Panc1 (cell line): ENCODE measurements at regions of chr16 and their contacts with region 1.

Region 1: GRCh38 chr16:64051824-64052223 is 1070.0 kb downstream of the CDH11 start:
- DNase-seq: peak; percentile 4
- ATAC-seq: no peak
- H3K4me3 ChIP-seq: no peak overlapping the region
- H3K27ac ChIP-seq: no peak overlapping the region
- H3K4me1 ChIP-seq: no peaks in the 10 kb centered on the region
- H3K27me3 ChIP-seq: no peaks in the 10 kb centered on the region
- CTCF ChIP-seq: peak; percentile 43; the same call in 1 of the 2 replicates

Region 2: GRCh38 chr16:63361032-63361624 is 690.7 kb before region 1 on chr16:
- CTCF ChIA-PET with region 1: no interaction called
- POLR2A ChIA-PET with region 1: no interaction called
- in situ Hi-C with region 1: no loop called
- intact Hi-C with region 1: loop called (anchors 10 kb)
- DNase-seq: peak; percentile 15
- ATAC-seq: no peak
- H3K4me3 ChIP-seq: no peak overlapping the region
- H3K27ac ChIP-seq: no peak overlapping the region
- H3K4me1 ChIP-seq: no peaks in the 10 kb centered on the region
- H3K27me3 ChIP-seq: no peaks in the 10 kb centered on the region
- CTCF ChIP-seq: peak; percentile 62; the same call in 1 of the 2 replicates

Region 3: GRCh38 chr16:63461248-63461841 is 590.5 kb before region 1 on chr16:
- CTCF ChIA-PET with region 1: no interaction called
- POLR2A ChIA-PET with region 1: no interaction called
- in situ Hi-C with region 1: no loop called
- intact Hi-C with region 1: loop called (anchors 10 kb)
- DNase-seq: peak; percentile 10
- ATAC-seq: no peak
- H3K4me3 ChIP-seq: no peak overlapping the region
- H3K27ac ChIP-seq: no peak overlapping the region
- H3K4me1 ChIP-seq: no peaks in the 10 kb centered on the region
- H3K27me3 ChIP-seq: no peaks in the 10 kb centered on the region
- CTCF ChIP-seq: peak; percentile 35; the same call in 1 of the 2 replicates

Region 4: GRCh38 chr16:64074706-64075105 is 22.9 kb after region 1 on chr16:
- CTCF ChIA-PET with region 1: no interaction called
- POLR2A ChIA-PET with region 1: no interaction called
- in situ Hi-C with region 1: no loop called
- intact Hi-C with region 1: no loop called
- DNase-seq: no peak
- ATAC-seq: no peak
- H3K4me3 ChIP-seq: no peak overlapping the region
- H3K27ac ChIP-seq: no peak overlapping the region
- H3K4me1 ChIP-seq: no peaks in the 10 kb centered on the region
- H3K27me3 ChIP-seq: no peaks in the 10 kb centered on the region
- CTCF ChIP-seq: no peak